ENCODE measurements at regions of chr15 and their contacts with region 1.

Region 1: GRCh38 chr15:45429974-45430792 is 51.8 kb upstream of the GATM start:
- H3K4me3 ChIP-seq: peak overlapping the region; percentile 46
- H3K27ac ChIP-seq: no peak overlapping the region
- H3K4me1 ChIP-seq: 0 out of 2 replicates have a peak, but pooled peaks cover 3% of the 10 kb centered on the region
- CTCF ChIP-seq: peak; percentile 94

Region 2: GRCh38 chr15:45230246-45230965 is 199.8 kb before region 1 on chr15:
- CTCF ChIA-PET with region 1: no interaction called
- POLR2A ChIA-PET with region 1: no interaction called
- H3K4me3 ChIP-seq: no peak overlapping the region
- H3K27ac ChIP-seq: no peak overlapping the region
- H3K4me1 ChIP-seq: no peaks in the 10 kb centered on the region
- CTCF ChIP-seq: no peak

Region 3: GRCh38 chr15:45414215-45414885 is 15.8 kb before region 1 on chr15:
- CTCF ChIA-PET with region 1: interaction called, 12 read pairs
- POLR2A ChIA-PET with region 1: no interaction called
- H3K4me3 ChIP-seq: no peak overlapping the region
- H3K27ac ChIP-seq: no peak overlapping the region
- H3K4me1 ChIP-seq: no peaks in the 10 kb centered on the region
- CTCF ChIP-seq: no peak

Region 4: DNA sequence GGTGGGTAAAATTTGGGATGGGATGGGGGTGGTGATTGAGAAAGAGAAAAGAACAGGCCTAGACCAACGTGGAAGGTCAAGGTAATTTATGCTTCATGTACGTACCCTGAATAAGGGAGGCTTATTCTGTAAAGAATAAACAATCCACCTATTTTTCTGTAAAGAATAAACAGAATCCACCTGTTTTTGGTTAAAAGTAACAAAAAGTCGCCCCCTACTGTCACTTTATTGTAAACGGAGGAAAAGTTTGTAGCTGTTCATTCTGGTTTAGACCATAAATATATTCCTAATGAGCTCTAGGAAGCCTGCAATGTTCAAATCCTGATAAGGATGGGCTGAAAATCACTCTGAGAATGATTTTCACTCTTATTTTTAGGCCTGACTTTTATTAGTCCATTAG is 181.1 kb after region 1 on chr15:
- CTCF ChIA-PET with region 1: interaction called, 14 read pairs
- POLR2A ChIA-PET with region 1: no interaction called
- H3K4me3 ChIP-seq: no peak overlapping the region
- H3K27ac ChIP-seq: no peak overlapping the region
- H3K4me1 ChIP-seq: no peaks in the 10 kb centered on the region
- CTCF ChIP-seq: no peak

Measured in HEK293 (cell line).